ENCODE measurements at regions of chr22 and their contacts with region 1.

Region 1: GRCh38 chr22:49930739-49931412 is 12.4 kb downstream of the CRELD2 start:
- DNase-seq: peak; percentile 87 to 95
- H3K4me3 ChIP-seq: no peak overlapping the region
- H3K27ac ChIP-seq: no peak overlapping the region
- H3K4me1 ChIP-seq: peaks cover 20% of the 10 kb centered on the region
- H3K27me3 ChIP-seq: no peaks in the 10 kb centered on the region; the same call in 1 of the 2 replicates
- CTCF ChIP-seq: peak; percentile 90

Region 2: DNA sequence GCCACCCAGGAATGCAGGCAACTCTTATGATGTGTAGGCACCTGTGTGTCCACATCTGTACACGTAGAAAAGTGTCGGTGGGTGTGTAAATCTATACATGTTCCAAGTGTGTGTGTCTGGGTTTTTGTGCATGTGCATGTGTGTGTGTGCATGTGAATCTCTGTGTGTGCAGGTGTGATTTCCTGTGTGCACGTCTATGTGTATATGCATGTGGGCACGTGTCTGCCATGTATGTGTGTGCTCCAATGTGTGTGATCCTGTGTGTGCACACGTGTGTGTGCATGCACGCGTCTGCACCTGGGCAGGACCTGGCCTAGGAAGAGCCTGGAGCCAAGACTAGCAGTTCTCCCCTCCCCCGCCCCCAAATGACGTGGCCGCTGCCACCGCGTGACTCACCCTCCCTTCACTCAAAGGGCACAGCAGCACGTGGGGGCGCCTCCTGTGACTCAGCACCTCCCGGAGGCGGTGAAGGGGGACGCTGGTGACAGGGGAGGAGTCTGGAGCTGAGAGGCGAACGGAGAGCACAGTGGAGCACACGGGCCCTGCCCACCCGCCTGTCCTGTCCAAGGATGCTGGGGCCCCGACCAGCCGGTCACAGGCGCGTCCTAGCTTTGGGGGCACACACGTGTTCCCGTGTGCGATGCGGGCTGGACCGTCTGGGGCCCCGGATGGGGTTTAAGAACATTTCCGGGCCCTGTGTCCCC is 39.8 kb after region 1 on chr22:
- CTCF ChIA-PET with region 1: no interaction called
- POLR2A ChIA-PET with region 1: interaction called, 5 read pairs
- intact Hi-C with region 1: loop called (anchors 2 kb)
- DNase-seq: peak; percentile 97 to 99
- H3K4me3 ChIP-seq: peak overlapping the region; percentile 56
- H3K27ac ChIP-seq: peak overlapping the region; percentile 67
- H3K4me1 ChIP-seq: peaks cover 13% of the 10 kb centered on the region
- H3K27me3 ChIP-seq: no peaks in the 10 kb centered on the region
- CTCF ChIP-seq: no peak

Region 3: DNA sequence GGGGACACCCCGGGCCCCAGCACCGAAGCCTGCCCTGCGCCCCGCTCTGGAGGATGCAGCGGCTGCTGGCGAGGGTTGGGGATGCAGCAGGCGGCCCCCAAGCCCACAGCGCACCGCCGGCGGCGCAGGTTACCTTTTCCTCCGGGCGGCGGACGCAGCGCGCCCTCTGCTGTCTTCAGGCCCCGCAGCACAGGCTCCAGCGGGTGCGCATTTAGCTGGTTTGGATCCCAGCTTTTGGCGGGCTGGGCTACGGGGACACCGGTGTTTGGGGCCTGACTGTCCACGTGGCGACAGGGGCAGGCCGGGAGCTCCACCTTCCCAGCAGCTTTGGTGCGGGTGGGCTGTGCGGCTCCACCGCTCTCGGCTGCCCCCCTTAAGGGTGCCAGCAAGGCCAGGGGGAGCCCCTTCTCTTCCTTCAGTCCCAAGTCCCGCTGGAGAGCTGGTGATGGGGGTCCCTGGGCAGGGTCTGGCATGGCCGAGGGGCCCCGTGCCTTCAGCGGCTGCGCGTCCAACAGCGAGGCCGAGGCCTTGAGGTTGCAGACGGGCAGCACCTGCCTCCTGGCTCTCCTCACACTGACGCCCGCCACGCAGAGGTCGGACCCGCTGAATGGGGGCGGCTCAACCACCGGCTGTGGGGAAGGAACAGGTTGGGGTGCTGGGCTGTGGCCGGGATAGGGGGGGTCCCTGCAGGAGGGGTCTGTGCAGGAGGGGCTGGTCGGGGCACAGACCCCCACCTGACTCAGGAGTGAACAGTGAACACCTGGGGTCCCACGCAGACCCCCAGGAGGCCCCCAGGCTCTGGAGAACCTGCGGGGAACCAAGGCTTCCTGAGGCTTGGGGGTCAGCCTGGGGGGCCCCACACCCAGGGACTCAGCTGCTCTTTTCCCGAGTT is 99.7 kb after region 1 on chr22:
- CTCF ChIA-PET with region 1: interaction called, 12 read pairs
- POLR2A ChIA-PET with region 1: no interaction called
- intact Hi-C with region 1: loop called (anchors 1 kb)
- DNase-seq: peak; percentile 70 to 84
- H3K4me3 ChIP-seq: no peak overlapping the region
- H3K27ac ChIP-seq: no peak overlapping the region
- H3K4me1 ChIP-seq: peaks cover 13% of the 10 kb centered on the region
- H3K27me3 ChIP-seq: peaks cover 58% of the 10 kb centered on the region
- CTCF ChIP-seq: peak; percentile 94

Region 4: DNA sequence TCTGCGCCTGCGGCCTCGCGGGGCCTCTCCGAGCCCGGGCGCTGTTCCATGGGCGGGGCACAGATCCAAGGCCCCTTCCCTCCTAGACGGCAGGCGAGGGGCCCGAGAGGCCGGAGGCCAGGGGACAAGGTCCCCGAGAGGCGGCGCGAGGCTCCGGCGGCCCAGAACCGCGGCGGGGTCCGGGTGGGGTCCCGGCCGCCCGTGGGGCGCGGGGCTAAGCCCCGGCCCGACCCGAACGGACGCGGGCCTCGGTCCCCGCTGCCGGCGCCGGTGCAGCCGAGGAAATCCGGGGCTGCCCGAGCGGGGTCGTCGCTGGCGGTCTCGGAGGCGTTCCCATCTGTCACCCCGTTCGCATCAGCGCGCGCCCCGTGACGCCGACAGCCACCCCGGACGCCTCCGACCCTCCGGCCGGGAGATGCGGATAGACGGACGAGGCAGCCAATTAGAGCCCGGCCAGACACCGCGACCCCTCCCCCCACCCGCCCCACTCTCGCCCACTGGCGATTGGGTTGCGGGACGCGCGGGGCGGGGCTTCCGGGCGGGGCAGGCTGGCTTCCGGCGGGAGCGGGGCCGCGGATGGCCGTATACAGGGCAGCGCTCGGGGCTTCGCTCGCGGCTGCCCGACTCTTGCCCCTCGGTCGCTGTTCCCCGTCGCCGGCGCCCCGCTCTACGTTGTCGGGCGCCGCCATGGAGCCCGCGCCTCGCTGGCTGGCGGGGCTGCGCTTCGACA is 269.8 kb after region 1 on chr22 and contains the start of gene SELENOO:
- CTCF ChIA-PET with region 1: no interaction called
- POLR2A ChIA-PET with region 1: no interaction called
- intact Hi-C with region 1: loop called (anchors 5 kb)
- DNase-seq: peak; percentile 82 to 89
- H3K4me3 ChIP-seq: peak within 1 kb of the TSS; percentile 89
- H3K27ac ChIP-seq: no peak within 1 kb of the TSS
- H3K4me1 ChIP-seq: peaks cover 12% of the 10 kb centered on the region
- H3K27me3 ChIP-seq: no peaks in the 10 kb centered on the region
- CTCF ChIP-seq: no peak
- total RNA-seq, gene SELENOO: 27.4 and 36.2 TPM in 2 replicates

Measured in PC-9 (cell line).